ENCODE measurements at regions of chr6 and their contacts with region 1.

Region 1: DNA sequence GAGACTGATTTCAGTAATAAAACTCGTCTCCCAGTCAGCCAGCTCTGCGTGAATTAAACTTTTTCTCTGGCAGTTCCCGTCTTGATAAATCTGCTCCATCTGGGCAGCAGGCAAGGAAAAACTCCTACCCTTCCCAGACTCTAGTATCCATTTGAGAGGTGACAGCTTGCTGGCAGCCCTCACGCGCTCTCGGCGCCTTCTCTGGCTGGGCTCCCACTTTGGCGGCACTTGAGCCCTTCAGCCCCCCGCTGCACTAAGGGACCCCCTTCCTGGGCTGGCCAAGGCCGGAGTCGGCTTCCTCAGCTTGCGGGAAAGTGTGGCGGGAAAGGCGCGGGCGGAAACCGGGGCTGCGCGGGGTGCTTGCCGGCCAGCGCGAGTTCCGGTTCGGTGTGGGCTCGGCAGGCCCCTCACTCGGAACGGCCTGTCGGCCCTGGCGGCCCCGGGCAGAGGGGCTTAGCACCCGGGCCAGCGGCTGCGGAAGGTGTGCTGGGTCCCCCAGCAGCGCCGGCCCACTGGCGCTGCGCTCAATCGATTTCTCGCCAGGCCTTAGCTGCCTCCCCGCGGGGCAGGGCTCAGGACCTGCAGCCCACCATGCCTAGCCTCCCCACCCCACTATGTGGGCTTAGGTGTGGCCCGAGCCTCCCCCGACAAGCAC is 21.8 kb upstream of the GMPR start:
- DNase-seq: peak in 1 of 2 donors; percentile 70
- H3K4me3 ChIP-seq: peak overlapping the region; percentile 39 to 58
- H3K27ac ChIP-seq: peak overlapping the region; percentile 65 to 74
- H3K4me1 ChIP-seq: peaks cover 6 to 30% of the 10 kb centered on the region in 2 donors
- H3K27me3 ChIP-seq: no peaks in the 10 kb centered on the region
- CTCF ChIP-seq: no peak

Region 2: DNA sequence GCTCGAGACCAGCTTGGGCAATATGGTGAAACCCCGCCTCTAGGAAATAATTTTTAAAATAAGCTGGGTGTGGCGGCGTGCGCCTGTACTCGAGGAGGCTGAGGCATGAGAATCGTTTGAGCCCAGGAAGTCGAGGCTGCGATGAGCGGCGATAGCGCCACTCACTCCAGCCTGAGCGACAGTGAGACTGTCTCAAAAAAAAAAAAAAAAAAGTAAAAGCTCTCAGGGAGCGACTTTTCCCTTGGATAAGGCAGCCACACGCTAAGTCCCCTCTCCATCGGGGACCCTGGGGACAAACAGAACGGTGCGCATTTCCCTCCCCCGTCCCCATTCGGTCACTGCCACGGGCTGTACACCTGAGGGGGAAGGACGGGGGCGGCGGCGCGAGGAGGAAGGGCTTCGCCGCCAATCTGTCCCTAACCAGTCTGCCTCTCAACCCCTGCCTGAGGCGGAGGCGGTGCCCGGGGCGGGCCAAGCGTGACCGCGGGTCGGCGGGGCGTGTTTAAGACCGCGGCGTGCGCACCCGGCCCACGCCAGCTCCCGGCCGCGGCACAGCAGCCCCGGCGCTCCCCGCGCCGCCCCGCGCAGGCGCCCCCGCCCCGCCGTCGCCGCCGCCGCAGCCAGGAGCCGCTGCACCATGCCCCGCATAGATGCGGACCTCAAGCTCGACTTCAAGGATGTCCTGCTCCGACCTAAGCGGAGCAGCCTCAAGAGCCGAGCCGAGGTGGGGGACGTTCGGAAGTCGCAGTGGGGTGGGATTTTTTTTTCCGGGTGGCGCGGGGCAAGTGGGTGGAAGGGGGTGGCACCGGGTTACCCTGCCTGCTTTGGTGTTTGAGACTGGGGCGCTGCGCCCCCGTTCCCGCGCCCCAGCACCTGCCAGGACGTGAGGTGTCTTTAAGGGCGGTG is 21.7 kb after region 1 on chr6 and contains the start of gene GMPR:
- intact Hi-C with region 1: loop called (anchors 1 kb)
- DNase-seq: peak; percentile 52 to 94
- H3K4me3 ChIP-seq: peak within 1 kb of the TSS; percentile 73 to 95
- H3K27ac ChIP-seq: peak within 1 kb of the TSS; percentile 86 to 87
- H3K4me1 ChIP-seq: peaks cover 4 to 45% of the 10 kb centered on the region in 2 donors
- H3K27me3 ChIP-seq: no peaks in the 10 kb centered on the region
- CTCF ChIP-seq: peak in 1 of 3 experiments; percentile 5
- total RNA-seq, gene GMPR: 18.4 TPM

Region 3: DNA sequence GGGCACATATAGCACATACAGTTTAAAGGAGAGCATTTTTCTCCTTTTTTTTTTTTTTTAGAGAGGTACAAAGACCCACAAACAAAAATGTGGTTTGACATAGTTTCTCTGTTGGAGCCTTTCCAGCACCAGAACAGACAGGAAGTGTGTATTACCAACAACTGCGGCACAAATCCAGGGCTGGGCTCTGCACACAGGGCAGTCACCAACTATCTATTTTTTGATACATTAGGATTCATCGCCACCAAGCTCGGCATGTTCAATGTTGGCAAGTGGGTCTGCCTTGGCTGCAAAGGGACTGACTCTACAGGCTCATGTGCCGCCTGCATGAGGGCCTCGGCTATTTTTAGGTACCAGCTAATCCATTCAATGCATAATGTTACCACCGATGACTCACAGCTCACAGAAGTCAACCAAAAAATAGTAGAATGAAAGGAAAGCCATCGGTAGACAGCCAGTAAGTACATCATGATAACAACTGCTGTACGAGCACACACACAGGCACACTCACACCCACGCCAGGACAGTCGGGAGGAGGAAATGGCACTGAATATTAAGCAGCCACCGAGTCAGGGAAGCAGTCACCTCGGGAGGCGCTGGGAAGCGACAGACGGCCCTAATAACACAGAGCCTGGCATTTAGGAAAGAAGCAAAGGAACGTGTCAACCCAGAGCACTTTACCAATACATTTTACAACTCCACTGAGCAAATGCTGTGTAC is 103.3 kb after region 1 on chr6:
- intact Hi-C with region 1: loop called (anchors 5 kb)
- DNase-seq: peak; percentile 88 to 94
- H3K4me3 ChIP-seq: peak overlapping the region; percentile 42 to 56
- H3K27ac ChIP-seq: peak overlapping the region; percentile 96
- H3K4me1 ChIP-seq: peaks cover 11 to 63% of the 10 kb centered on the region in 2 donors
- H3K27me3 ChIP-seq: no peaks in the 10 kb centered on the region
- CTCF ChIP-seq: no peak

Region 4: GRCh38 chr6:16450285-16450684 is 233.7 kb after region 1 on chr6:
- intact Hi-C with region 1: no loop called
- DNase-seq: no peak
- H3K4me3 ChIP-seq: no peak overlapping the region
- H3K27ac ChIP-seq: no peak overlapping the region
- H3K4me1 ChIP-seq: no peaks in the 10 kb centered on the region
- H3K27me3 ChIP-seq: no peaks in the 10 kb centered on the region
- CTCF ChIP-seq: no peak

Region 5: GRCh38 chr6:16770701-16771569 is 554.3 kb after region 1 on chr6:
- intact Hi-C with region 1: loop called (anchors 5 kb)
- DNase-seq: peak; percentile 22 to 86
- H3K4me3 ChIP-seq: no peak overlapping the region
- H3K27ac ChIP-seq: peak overlapping the region; percentile 32 to 51
- H3K4me1 ChIP-seq: peaks cover 6 to 25% of the 10 kb centered on the region in 2 donors
- H3K27me3 ChIP-seq: no peaks in the 10 kb centered on the region
- CTCF ChIP-seq: peak; percentile 79 to 90 (median 87)

Region 6: DNA sequence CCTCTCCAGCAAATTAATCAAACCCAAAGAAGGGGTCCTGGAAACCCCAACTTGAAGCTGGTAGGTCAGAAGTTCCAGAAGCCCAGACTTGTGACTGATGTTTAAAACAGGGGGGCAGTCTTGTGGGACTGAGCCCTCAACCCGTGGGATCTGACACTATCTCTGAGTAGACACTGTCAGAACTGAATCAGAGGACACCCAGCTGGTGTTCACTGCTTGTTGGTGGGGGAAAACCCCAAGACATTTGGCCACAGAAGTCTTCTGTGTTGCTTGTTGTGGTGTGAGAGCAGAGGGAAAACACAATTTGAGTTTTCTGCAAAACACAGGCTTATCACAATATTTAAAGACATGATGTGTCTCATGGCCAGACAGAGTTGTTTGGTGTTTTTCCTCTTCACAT is 1740.9 kb after region 1 on chr6:
- intact Hi-C with region 1: loop called (anchors 10 kb)
- DNase-seq: no peak
- H3K4me3 ChIP-seq: no peak overlapping the region
- H3K27ac ChIP-seq: peak overlapping the region; percentile 61 to 89
- H3K4me1 ChIP-seq: peaks cover 9 to 44% of the 10 kb centered on the region in 2 donors
- H3K27me3 ChIP-seq: no peaks in the 10 kb centered on the region
- CTCF ChIP-seq: no peak

Measured in ascending aorta (tissue), 2 donors.